B cell (primary cell): ENCODE measurements at regions of chr20 and their contacts with region 1.

Region 1: DNA sequence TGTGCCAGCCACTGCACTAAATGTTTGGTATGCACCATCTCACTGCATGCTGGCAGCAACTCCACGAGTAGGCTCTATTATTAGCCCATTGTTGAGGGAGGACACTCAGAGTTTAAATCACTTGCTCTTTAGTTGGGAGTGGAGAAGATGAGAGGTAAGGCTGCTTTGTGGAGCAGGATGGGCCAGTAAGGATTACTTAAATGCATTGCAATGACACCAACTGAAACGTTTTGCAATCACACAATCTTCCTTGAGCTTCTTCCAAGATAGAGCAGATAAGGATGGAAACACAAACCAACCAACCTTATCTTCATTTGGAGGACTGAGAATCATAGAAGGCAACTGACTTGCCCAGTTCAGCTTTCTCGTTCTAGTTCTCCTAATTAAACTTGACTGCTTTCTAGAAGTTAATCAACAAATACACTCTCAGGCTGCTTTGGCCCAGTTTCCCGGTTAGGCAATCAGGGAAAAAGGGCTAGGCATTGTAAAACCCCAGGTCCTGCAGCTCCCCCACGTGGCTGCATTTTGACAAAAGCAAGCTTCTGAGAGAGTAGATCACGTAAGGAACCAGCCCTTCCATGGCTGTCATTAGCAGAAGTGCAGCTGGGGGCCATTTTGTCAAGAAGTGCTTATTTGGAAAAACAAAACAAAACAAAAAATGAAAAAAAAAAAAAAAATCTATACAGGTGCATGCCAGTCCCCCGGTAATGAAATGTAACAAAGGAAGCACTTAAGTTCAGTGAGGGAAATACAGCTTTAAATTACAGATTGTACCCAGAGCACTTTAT is 130.6 kb downstream of the BCAS1 start:
- DNase-seq: peak; percentile 87
- ATAC-seq: peak; percentile 68
- H3K4me3 ChIP-seq: peak overlapping the region in 4 of 5 experiments; percentile 5 to 40 (median 19)
- H3K4me3 Mint-ChIP-seq: peak overlapping the region; percentile 49
- H3K27ac ChIP-seq: peak overlapping the region in 1 of 2 donors; percentile 79
- H3K27ac Mint-ChIP-seq: peak overlapping the region; percentile 91
- H3K4me1 ChIP-seq: peaks cover 60 to 88% of the 10 kb centered on the region in 2 donors
- H3K4me1 Mint-ChIP-seq: peaks cover 86% of the 10 kb centered on the region
- H3K27me3 ChIP-seq: no peaks in the 10 kb centered on the region
- H3K27me3 Mint-ChIP-seq: no peaks in the 10 kb centered on the region
- CTCF ChIP-seq: peak; percentile 82

Region 2: DNA sequence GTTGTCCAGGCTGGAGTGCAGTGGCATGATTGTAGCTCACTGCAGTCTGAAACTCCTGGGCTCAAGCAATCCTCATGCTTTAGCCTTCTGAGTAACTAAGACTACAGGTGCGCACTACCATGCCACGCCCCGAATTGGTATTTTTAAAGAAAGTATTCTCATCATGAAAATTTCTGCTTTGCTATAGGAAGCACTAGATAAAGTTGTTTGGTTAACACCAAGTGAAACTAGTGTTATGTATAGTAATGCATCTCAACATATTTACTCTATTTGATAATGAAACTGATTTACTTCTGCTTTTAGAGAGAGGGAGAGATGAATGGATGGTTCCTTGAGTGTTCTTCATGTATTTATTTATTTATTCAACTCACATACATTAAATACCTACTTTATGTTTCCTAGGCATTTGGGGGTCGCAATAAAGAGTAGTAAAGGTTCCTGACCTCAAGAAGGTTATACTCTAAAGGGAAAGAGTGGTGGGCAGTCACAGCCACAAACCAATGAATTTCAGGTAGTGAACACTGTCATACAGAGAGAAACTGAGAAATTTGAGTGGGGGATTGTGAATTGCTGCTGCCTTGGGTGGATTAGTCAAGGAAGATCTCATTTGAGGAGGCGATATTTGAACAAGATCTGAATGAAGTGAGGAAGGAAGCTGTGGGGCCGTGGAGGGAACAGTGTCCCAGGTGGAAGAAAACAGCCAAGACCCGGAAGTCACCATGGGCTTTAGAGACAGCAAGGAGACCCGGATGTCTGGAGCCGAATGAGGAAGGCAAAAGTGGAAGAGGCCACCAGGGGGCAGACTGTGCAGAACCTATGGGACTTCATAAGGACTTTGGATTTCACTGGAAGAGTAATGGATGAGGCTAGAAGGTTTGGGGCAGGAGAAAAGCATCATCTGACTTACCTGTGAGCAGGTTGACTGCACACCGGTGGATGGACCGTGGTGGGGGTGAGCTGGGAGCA is 782.0 kb before region 1 on chr20:
- CTCF ChIA-PET with region 1: interaction called, 5 read pairs
- POLR2A ChIA-PET with region 1: no interaction called
- intact Hi-C with region 1: loop called (anchors 5 kb)
- DNase-seq: peak; percentile 52
- ATAC-seq: peak; percentile 67
- H3K4me3 ChIP-seq: no peak overlapping the region
- H3K4me3 Mint-ChIP-seq: peak overlapping the region; percentile 57
- H3K27ac ChIP-seq: peak overlapping the region; percentile 44 to 51
- H3K27ac Mint-ChIP-seq: peak overlapping the region; percentile 92
- H3K4me1 ChIP-seq: peaks cover 3 to 19% of the 10 kb centered on the region in 2 donors
- H3K4me1 Mint-ChIP-seq: peaks cover 40% of the 10 kb centered on the region
- H3K27me3 ChIP-seq: no peaks in the 10 kb centered on the region
- H3K27me3 Mint-ChIP-seq: peaks cover 6% of the 10 kb centered on the region
- CTCF ChIP-seq: peak; percentile 47

Region 3: DNA sequence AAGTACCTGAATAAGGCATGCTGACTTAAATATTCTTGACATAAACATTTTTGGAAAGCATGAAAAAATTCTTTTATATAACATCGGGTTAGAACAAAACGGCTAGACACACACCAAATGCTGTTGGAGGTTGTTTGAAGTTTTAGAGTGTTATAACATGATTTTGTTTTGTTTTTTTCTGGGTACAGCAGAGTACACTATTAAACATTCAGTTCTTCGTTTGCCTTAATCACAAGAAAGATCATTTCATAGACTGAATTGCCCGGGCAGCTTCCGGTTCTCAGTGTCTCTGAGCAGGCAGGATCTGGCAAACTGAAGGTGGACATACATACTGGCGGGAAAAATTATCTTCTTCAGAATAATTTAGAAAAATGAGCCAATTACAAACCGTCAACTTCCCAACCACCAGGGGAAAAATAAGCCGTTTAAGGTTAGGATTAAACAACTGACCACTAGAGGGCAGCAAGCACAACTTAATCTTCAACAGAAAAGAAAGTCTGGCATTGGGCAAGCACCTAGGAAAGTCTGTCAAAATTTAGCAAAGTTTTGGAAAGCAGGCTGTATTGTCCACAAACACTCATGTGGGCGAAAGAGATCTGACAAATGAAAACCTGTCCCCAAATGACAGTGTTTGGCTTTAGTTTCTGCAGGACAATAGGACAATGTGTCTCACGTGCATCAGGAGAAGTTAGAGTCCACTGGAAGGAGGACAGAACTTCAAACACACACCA is 361.1 kb before region 1 on chr20:
- CTCF ChIA-PET with region 1: interaction called, 137 read pairs
- POLR2A ChIA-PET with region 1: no interaction called
- intact Hi-C with region 1: loop called (anchors 1 kb)
- DNase-seq: peak; percentile 91
- ATAC-seq: peak; percentile 62
- H3K4me3 ChIP-seq: peak overlapping the region in 1 of 5 experiments; percentile 45
- H3K4me3 Mint-ChIP-seq: peak overlapping the region; percentile 73
- H3K27ac ChIP-seq: peak overlapping the region; percentile 54 to 77
- H3K27ac Mint-ChIP-seq: peak overlapping the region; percentile 93
- H3K4me1 ChIP-seq: peaks cover 53 to 58% of the 10 kb centered on the region in 2 donors
- H3K4me1 Mint-ChIP-seq: peaks cover 54% of the 10 kb centered on the region
- H3K27me3 ChIP-seq: no peaks in the 10 kb centered on the region
- H3K27me3 Mint-ChIP-seq: no peaks in the 10 kb centered on the region
- CTCF ChIP-seq: peak; percentile 94

Region 4: GRCh38 chr20:53738039-53738944 is 201.5 kb before region 1 on chr20:
- CTCF ChIA-PET with region 1: interaction called, 4 read pairs
- POLR2A ChIA-PET with region 1: interaction called, 3 read pairs
- intact Hi-C with region 1: loop called (anchors 5 kb)
- DNase-seq: peak; percentile 41
- ATAC-seq: no peak
- H3K4me3 ChIP-seq: no peak overlapping the region
- H3K4me3 Mint-ChIP-seq: peak overlapping the region; percentile 10
- H3K27ac ChIP-seq: peak overlapping the region; percentile 77 to 79
- H3K27ac Mint-ChIP-seq: peak overlapping the region; percentile 83
- H3K4me1 ChIP-seq: peaks cover 64 to 65% of the 10 kb centered on the region in 2 donors
- H3K4me1 Mint-ChIP-seq: peaks cover 71% of the 10 kb centered on the region
- H3K27me3 ChIP-seq: no peaks in the 10 kb centered on the region
- H3K27me3 Mint-ChIP-seq: no peaks in the 10 kb centered on the region
- CTCF ChIP-seq: no peak

Region 5: GRCh38 chr20:53869466-53870258 is 70.1 kb before region 1 on chr20:
- CTCF ChIA-PET with region 1: interaction called, 44 read pairs
- POLR2A ChIA-PET with region 1: no interaction called
- intact Hi-C with region 1: loop called (anchors 1 kb)
- DNase-seq: peak; percentile 82
- ATAC-seq: peak; percentile 76
- H3K4me3 ChIP-seq: peak overlapping the region in 2 of 5 experiments; percentile 35 to 54
- H3K4me3 Mint-ChIP-seq: peak overlapping the region; percentile 40
- H3K27ac ChIP-seq: peak overlapping the region; percentile 65 to 79
- H3K27ac Mint-ChIP-seq: peak overlapping the region; percentile 72
- H3K4me1 ChIP-seq: peaks cover 69% of the 10 kb centered on the region in 2 donors
- H3K4me1 Mint-ChIP-seq: peaks cover 64% of the 10 kb centered on the region
- H3K27me3 ChIP-seq: no peaks in the 10 kb centered on the region
- H3K27me3 Mint-ChIP-seq: no peaks in the 10 kb centered on the region
- CTCF ChIP-seq: peak; percentile 89

Region 6: DNA sequence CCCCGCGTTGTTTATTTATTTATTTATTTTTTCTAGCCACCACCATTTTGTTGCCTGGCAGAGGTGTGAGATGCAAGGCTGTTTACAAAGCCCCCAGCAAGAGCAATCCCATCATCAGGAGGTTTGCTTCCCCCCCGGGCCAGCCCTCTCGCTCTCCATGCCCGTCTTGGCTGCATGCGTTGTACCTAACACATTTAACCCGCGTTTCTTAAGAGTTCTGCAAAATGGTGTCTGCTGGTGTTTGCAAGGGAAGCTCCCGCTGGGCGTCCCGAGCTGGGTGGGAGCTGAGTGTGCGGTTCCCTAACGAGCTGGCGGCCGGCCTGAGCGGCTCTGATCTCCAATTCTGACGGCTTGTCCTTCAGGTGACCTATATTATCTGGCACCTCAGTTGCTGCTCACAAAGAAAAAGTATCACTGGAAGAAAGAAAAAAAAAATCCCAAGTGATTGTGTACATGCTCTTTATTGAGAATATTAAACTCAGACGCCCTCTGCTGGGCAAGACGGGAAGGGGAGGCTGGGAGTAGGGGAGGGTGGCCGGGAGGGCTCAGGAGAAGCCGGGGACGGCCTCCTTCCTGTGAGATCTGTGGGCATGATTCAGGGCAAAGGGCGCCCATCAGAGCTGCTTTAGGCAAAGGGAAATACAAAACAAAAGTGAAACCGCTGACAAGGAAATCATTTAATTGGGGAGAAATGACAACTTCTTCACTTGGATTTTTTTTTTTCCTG is 24.2 kb before region 1 on chr20:
- CTCF ChIA-PET with region 1: interaction called, 593 read pairs
- POLR2A ChIA-PET with region 1: interaction called, 8 read pairs
- intact Hi-C with region 1: loop called (anchors 1 kb)
- DNase-seq: peak; percentile 91
- ATAC-seq: peak; percentile 94
- H3K4me3 ChIP-seq: peak overlapping the region; percentile 69 to 83 (median 74)
- H3K4me3 Mint-ChIP-seq: peak overlapping the region; percentile 94
- H3K27ac ChIP-seq: peak overlapping the region; percentile 45 to 68
- H3K27ac Mint-ChIP-seq: peak overlapping the region; percentile 90
- H3K4me1 ChIP-seq: peaks cover 17 to 38% of the 10 kb centered on the region in 2 donors
- H3K4me1 Mint-ChIP-seq: peaks cover 40% of the 10 kb centered on the region
- H3K27me3 ChIP-seq: no peaks in the 10 kb centered on the region
- H3K27me3 Mint-ChIP-seq: no peaks in the 10 kb centered on the region
- CTCF ChIP-seq: peak; percentile 86

Region 7: DNA sequence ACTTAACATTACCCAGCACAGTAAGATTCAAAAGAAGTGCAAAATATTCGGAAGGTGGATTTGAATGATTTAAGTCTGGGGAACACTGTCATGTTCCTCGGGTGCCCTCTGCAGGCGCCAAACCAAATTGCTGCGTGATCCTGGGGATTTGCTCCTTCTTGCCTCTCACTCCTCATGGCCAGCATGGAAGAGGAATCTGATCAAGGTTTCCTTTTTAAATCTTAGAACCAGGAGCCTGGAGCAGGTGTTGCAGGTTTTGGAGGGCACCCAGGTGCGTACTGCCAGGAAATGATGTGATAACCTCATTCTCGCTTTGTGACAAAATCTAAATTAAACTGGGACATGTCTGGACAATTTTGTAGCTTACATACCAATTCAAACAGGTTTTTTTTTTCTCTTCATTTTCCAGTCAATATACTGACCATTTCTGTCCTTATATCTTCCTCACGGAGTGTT is 260.0 kb after region 1 on chr20:
- CTCF ChIA-PET with region 1: interaction called, 4 read pairs
- POLR2A ChIA-PET with region 1: no interaction called
- intact Hi-C with region 1: loop called (anchors 2 kb)
- DNase-seq: peak; percentile 72
- ATAC-seq: peak; percentile 53
- H3K4me3 ChIP-seq: no peak overlapping the region
- H3K4me3 Mint-ChIP-seq: no peak overlapping the region
- H3K27ac ChIP-seq: no peak overlapping the region
- H3K27ac Mint-ChIP-seq: no peak overlapping the region
- H3K4me1 ChIP-seq: peaks cover 0 to 8% of the 10 kb centered on the region in 2 donors
- H3K4me1 Mint-ChIP-seq: peaks cover 10% of the 10 kb centered on the region
- H3K27me3 ChIP-seq: no peaks in the 10 kb centered on the region
- H3K27me3 Mint-ChIP-seq: peaks cover 7% of the 10 kb centered on the region
- CTCF ChIP-seq: peak; percentile 99